ENCODE measurements at regions of chr20 and their contacts with region 1.

Region 1: DNA sequence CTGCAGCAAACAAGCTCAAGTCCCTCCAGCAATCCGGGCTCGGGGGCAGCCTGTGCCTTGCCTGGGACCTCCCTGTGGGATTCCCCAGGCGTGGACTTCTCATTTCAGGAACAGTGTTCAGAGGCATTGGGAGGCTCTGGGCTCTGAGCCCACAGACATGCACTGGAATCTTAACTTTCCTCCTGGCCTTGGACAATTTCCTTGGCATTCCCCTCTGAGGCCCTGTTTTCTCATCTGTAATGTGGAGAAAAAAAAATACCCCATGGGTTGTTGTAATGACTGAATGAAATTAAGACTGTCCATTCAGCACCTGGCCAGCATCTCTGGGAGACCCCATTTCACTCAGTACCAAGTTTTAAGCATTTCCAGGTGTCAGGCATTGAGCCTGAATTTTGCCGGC is 17.6 kb downstream of the BPIFB4 start:
- DNase-seq: no peak
- ATAC-seq: peak in 1 of 2 donors; percentile 64
- H3K4me3 ChIP-seq: no peak overlapping the region
- H3K27ac ChIP-seq: no peak overlapping the region
- H3K4me1 ChIP-seq: no peaks in the 10 kb centered on the region
- H3K27me3 ChIP-seq: peaks cover 4% of the 10 kb centered on the region
- CTCF ChIP-seq: no peak

Region 2: GRCh38 chr20:32902456-32903420 is 194.3 kb before region 1 on chr20:
- intact Hi-C with region 1: loop called (anchors 10 kb)
- DNase-seq: peak; percentile 68
- ATAC-seq: peak; percentile 81 to 83
- H3K4me3 ChIP-seq: no peak overlapping the region
- H3K27ac ChIP-seq: no peak overlapping the region
- H3K4me1 ChIP-seq: no peaks in the 10 kb centered on the region
- H3K27me3 ChIP-seq: no peaks in the 10 kb centered on the region
- CTCF ChIP-seq: peak; percentile 93

Region 3: DNA sequence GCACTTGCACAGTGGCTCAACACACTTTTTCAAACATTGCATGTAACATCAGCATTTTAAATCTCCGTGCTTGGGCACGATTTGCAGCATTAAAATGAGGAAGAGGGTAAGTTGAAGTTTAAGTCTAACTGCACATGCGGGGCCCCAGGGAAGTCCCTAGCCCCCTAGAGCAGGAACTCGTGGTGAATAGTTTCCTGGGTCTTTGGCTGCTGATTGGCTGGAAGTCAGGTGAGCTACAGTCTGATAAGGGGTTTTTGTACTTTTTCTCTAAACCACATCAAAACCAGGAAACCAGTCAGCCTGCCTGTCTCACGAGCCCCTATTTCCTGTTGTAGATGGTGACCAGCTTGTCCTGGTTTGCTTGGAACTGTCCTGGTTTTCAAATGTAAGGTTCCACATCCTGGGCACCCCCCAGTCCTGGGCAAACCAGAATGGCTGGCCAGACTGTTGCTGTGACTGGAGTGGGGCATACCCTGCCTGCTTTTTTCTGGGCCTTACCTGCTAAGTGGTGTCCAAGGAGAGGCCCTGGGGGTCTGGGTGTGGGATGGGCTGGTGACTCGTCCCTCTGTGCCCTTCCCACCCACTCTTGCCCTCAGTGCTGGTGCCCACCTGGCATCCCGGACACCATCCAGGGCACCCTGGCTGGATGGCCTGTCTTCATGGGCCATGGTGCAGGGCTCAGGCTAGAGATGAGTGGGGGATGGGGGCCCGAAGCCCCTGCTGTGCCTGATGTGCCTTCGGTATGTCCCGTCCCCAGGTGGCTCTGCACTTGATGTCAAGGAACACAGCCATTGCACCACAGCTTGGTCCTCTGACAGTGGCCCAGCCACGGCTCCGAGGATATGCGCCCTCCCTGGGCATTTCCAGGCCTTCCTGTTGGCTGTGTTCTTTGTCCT is 124.6 kb before region 1 on chr20:
- intact Hi-C with region 1: no loop called
- DNase-seq: no peak
- ATAC-seq: peak; percentile 30 to 52
- H3K4me3 ChIP-seq: no peak overlapping the region
- H3K27ac ChIP-seq: no peak overlapping the region
- H3K4me1 ChIP-seq: peaks cover 8% of the 10 kb centered on the region
- H3K27me3 ChIP-seq: no peaks in the 10 kb centered on the region
- CTCF ChIP-seq: no peak

Region 4: DNA sequence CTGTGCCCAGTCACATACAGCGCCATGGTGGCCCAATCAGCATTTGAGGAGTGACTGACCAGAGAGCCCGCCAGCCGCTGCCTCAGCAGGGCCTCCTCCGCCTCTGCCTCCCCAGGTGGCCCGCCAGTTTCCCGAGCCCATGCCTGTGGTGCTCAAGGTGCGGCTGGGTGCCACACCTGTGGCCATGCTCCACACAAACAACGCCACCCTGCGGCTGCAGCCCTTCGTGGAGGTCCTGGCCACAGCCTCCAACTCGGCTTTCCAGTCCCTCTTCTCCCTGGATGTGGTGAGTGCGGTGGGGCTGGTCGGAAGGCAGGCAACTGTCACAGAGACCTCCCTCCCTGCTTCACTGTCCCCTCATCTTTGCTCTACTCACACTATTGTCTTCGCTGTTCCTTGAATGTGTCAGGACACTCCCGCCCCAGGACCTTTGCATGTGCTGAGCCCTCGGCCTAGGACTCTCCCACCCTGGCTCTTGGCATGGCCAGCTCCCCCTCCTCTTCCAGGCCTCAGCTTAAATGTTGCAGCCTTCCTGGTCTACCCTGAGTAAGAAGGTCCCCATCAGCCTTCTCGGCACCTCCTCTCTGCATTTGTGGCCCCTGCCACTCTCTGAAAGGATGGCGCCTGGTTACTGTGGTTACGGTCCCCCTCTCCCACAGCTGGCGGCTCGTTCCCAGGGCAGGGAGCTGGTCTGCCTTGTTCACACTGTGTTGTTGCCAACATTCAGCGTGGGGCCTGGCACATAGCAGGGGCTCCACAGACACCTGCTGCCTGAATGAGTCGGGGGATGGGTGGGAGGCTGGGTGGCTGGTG is 77.3 kb before region 1 on chr20:
- intact Hi-C with region 1: no loop called
- DNase-seq: no peak
- ATAC-seq: no peak
- H3K4me3 ChIP-seq: no peak overlapping the region
- H3K27ac ChIP-seq: no peak overlapping the region
- H3K4me1 ChIP-seq: no peaks in the 10 kb centered on the region
- H3K27me3 ChIP-seq: no peaks in the 10 kb centered on the region
- CTCF ChIP-seq: no peak